ENCODE measurements at regions of chr4 and their contacts with region 1.

Region 1: GRCh38 chr4:151988591-151988990 is 227.8 kb upstream of the GATB start:
- DNase-seq: no peak
- H3K4me3 ChIP-seq: no peak overlapping the region
- H3K27ac ChIP-seq: no peak overlapping the region
- H3K4me1 ChIP-seq: no peaks in the 10 kb centered on the region
- CTCF ChIP-seq: no peak

Region 2: DNA sequence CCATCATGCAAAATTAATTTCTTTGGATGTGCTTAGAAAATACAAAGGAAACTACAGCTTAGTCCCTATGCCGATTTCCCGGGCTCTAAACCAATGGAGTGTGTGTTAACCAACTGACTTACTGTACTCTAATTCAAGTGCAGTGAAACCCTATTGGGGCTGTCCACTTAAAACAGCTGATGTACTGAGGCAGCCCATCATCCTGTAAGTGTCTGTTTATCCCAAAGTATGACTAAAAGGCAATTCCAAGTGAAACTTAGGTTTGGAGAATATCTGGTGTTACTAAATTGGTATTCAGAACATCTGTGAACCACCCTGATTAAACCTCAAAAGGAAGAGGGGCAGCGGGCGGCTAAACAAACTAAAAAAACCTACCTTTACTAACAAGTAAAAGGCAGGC is 307.5 kb before region 1 on chr4:
- CTCF ChIA-PET with region 1: no interaction called
- POLR2A ChIA-PET with region 1: no interaction called
- intact Hi-C with region 1: loop called (anchors 5 kb)
- DNase-seq: no peak
- H3K4me3 ChIP-seq: no peak overlapping the region
- H3K27ac ChIP-seq: no peak overlapping the region
- H3K4me1 ChIP-seq: no peaks in the 10 kb centered on the region
- CTCF ChIP-seq: no peak

Region 3: DNA sequence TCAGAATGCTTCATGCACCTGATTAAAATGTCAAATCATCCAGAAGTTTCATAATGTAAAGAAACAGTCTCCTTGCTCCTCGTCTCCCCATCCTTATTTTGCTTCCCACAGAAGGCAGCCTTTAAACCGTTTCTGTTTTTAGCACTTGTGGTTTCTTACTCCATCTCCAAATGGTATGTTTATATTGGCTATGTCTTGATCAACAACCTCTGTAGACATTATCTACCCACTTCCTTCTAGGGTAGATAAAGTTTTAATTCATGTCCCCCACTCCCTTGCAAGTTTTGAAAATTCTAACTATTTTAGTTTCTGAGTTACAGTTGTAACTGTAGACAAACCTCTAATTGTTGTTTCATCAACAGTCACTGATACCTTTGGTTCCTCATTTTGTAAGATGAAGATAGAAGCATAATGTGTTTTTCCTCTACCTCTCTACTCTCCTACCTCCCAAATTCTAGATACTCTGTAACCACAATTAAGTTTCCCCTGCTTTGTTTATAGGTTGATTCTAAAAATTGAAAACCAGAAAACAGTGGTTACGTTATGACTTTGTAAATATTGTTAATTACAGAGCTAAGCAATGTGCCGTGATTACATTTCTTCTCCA is 64.0 kb after region 1 on chr4:
- CTCF ChIA-PET with region 1: no interaction called
- POLR2A ChIA-PET with region 1: no interaction called
- intact Hi-C with region 1: no loop called
- DNase-seq: no peak
- H3K4me3 ChIP-seq: no peak overlapping the region
- H3K27ac ChIP-seq: no peak overlapping the region
- H3K4me1 ChIP-seq: no peaks in the 10 kb centered on the region
- CTCF ChIP-seq: no peak

Measured in OCI-LY7 (cell line).